ENCODE measurements at regions of chr9 and their contacts with region 1.

Region 1: GRCh38 chr9:75148561-75148960 is 60.2 kb downstream of the OSTF1 start:
- DNase-seq: peak in 1 of 5 donors; percentile 12
- H3K4me3 ChIP-seq: no peak overlapping the region
- H3K27ac ChIP-seq: peak overlapping the region in 1 of 2 donors; percentile 20
- H3K4me1 ChIP-seq: no peaks in the 10 kb centered on the region
- H3K27me3 ChIP-seq: no peaks in the 10 kb centered on the region
- CTCF ChIP-seq: no peak
- EP300 ChIP-seq: no peak
- POLR2A ChIP-seq: no peak

Region 2: DNA sequence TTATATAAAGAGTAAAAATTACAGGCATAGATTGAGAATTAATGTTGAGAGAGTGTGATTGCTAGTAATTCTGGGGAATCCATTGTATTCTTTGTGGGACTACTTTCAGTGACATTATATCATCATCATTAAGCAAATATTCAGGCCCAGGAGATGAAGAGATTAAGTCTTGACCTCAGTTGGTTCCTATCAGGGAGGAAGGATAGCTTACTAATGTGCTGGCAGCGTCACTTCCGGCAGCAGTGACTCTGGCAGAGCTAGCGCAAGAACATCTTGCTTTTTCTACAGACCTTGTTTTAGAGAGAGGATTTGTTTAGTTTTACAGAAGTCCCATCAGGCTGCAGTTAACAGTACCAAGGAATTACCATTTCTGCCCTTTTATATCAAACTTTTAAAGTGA is 40.0 kb before region 1 on chr9:
- intact Hi-C with region 1: no loop called
- DNase-seq: peak in 3 of 5 donors; percentile 26 to 67 (median 51)
- H3K4me3 ChIP-seq: no peak overlapping the region
- H3K27ac ChIP-seq: no peak overlapping the region
- H3K4me1 ChIP-seq: peaks cover 10% of the 10 kb centered on the region
- H3K27me3 ChIP-seq: no peaks in the 10 kb centered on the region
- CTCF ChIP-seq: no peak
- EP300 ChIP-seq: no peak
- POLR2A ChIP-seq: no peak

Region 3: DNA sequence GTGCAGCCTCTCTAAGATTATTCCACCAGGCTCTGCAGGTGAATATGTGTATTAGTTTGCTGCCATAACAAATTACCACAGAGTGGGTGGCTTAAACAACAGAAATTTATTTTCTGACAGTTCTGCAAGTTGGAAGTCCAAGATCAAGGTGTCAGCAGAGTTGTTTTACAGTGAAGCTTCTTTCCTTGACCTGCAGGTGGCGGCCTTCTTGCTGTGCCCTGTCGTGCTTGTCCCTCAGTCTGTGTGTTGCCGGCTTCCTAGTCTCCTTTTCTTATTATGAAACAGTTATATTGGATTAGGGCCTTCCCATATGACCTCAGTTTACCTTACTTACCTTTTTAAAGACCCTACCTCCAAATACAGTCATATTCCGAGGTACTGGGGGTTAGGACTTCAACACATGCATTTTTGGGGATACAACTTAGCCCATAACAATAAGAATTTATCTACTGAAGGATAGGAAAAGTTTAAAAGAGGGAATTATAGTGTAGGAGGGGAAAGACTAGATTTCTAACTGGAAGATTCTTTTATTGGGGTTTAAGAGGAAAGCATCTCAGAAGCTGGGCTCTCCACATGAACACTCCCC is 37.1 kb after region 1 on chr9:
- intact Hi-C with region 1: no loop called
- DNase-seq: no peak
- H3K4me3 ChIP-seq: no peak overlapping the region
- H3K27ac ChIP-seq: no peak overlapping the region
- H3K4me1 ChIP-seq: no peaks in the 10 kb centered on the region
- H3K27me3 ChIP-seq: no peaks in the 10 kb centered on the region
- CTCF ChIP-seq: no peak
- EP300 ChIP-seq: no peak
- POLR2A ChIP-seq: no peak

Region 4: GRCh38 chr9:75921391-75922127 is 773.0 kb after region 1 on chr9:
- intact Hi-C with region 1: loop called in 1 of 4 experiments (anchors 5 kb)
- DNase-seq: no peak
- H3K4me3 ChIP-seq: no peak overlapping the region
- H3K27ac ChIP-seq: no peak overlapping the region
- H3K4me1 ChIP-seq: peaks cover 1% of the 10 kb centered on the region
- H3K27me3 ChIP-seq: no peaks in the 10 kb centered on the region
- CTCF ChIP-seq: no peak
- EP300 ChIP-seq: no peak
- POLR2A ChIP-seq: no peak

Measured in ovary (tissue), 10 donors.